CD4-positive, alpha-beta T cell (primary cell): ENCODE measurements at regions of chr14 and their contacts with region 1.

Region 1: GRCh38 chr14:35826218-35826951 is at the start of gene BRMS1L:
- DNase-seq: peak; percentile 90 to 98 (median 95)
- ATAC-seq: peak; percentile 98
- H3K4me3 ChIP-seq: peak within 1 kb of the TSS; percentile 99
- H3K4me3 Mint-ChIP-seq: peak within 1 kb of the TSS; percentile 88
- H3K27ac ChIP-seq: peak within 1 kb of the TSS; percentile 72 to 89
- H3K27ac Mint-ChIP-seq: peak within 1 kb of the TSS; percentile 68
- H3K4me1 ChIP-seq: peaks cover 15% of the 10 kb centered on the region
- H3K4me1 Mint-ChIP-seq: peaks cover 31% of the 10 kb centered on the region
- H3K27me3 ChIP-seq: no peaks in the 10 kb centered on the region
- H3K27me3 Mint-ChIP-seq: no peaks in the 10 kb centered on the region
- CTCF ChIP-seq: no peak
- total RNA-seq, gene BRMS1L: 6.1 to 9.2 TPM

Region 2: GRCh38 chr14:34539407-34540180 is 1286.8 kb before region 1 on chr14 and contains the start of gene EAPP:
- CTCF ChIA-PET with region 1: no interaction called
- POLR2A ChIA-PET with region 1: no interaction called
- intact Hi-C with region 1: loop called in 1 of 2 experiments (anchors 5 kb)
- DNase-seq: peak; percentile 90 to 97 (median 95)
- ATAC-seq: peak; percentile 97
- H3K4me3 ChIP-seq: peak within 1 kb of the TSS; percentile 88
- H3K4me3 Mint-ChIP-seq: peak within 1 kb of the TSS; percentile 99
- H3K27ac ChIP-seq: peak within 1 kb of the TSS; percentile 89 to 93
- H3K27ac Mint-ChIP-seq: peak within 1 kb of the TSS; percentile 98
- H3K4me1 ChIP-seq: peaks cover 31% of the 10 kb centered on the region
- H3K4me1 Mint-ChIP-seq: peaks cover 33% of the 10 kb centered on the region
- H3K27me3 ChIP-seq: no peaks in the 10 kb centered on the region
- H3K27me3 Mint-ChIP-seq: no peaks in the 10 kb centered on the region
- CTCF ChIP-seq: no peak
- total RNA-seq, gene EAPP: 94.5 to 98.3 TPM

Region 3: DNA sequence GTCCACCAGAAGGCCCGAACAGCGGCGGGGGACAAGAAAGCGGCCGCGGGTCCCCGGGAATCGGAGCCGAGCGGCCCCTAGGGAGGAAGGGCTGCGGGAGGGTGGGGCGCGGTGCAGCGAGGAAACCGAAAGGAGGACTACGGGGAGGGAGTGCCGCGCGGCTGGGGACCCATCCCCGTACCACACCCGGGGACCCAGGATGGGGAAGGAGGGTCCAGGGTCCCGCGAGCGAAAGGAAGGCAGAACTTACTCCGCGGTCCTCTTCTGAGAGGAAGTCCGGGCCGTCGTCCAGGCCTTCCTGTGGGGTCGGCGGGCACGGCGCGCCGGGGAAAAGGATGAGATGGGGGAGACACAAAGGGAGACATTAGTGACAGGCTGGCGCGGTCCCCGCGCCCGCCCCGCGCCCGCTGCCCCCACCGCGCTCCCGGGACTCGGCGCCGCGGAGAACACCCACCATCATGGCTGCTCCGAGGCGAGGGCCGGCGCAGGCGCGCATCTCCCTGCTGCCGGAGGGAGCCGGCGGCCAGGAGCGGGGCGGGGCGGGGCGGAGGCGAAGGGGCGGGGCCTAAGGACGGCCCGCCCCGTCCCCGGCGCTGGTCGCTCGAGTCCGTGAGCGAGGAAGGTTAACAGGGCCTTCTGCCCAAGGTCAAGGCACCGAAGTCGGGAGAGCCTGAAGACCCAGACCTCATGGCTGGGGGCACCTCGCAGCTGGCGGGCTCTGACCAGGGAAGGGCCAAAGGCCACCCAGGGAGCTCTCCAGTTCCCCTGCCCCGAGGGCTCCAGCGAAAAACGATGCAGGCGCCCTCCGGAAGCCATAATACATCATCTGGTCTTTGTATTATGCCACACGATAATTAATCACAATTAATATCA is 1196.5 kb before region 1 on chr14 and contains the start of gene SNX6:
- CTCF ChIA-PET with region 1: no interaction called
- POLR2A ChIA-PET with region 1: no interaction called
- intact Hi-C with region 1: loop called in 1 of 2 experiments (anchors 5 kb)
- DNase-seq: peak; percentile 73 to 94 (median 81)
- ATAC-seq: peak; percentile 96
- H3K4me3 ChIP-seq: peak within 1 kb of the TSS; percentile 96
- H3K4me3 Mint-ChIP-seq: peak within 1 kb of the TSS; percentile 95
- H3K27ac ChIP-seq: peak within 1 kb of the TSS; percentile 86 to 89
- H3K27ac Mint-ChIP-seq: peak within 1 kb of the TSS; percentile 88
- H3K4me1 ChIP-seq: peaks cover 39% of the 10 kb centered on the region
- H3K4me1 Mint-ChIP-seq: peaks cover 27% of the 10 kb centered on the region
- H3K27me3 ChIP-seq: no peaks in the 10 kb centered on the region
- H3K27me3 Mint-ChIP-seq: no peaks in the 10 kb centered on the region
- CTCF ChIP-seq: no peak
- total RNA-seq, gene SNX6: 51.5 to 55.8 TPM

Region 4: GRCh38 chr14:35046048-35046741 is 780.2 kb before region 1 on chr14 and contains the start of gene FAM177A1:
- CTCF ChIA-PET with region 1: no interaction called
- POLR2A ChIA-PET with region 1: no interaction called
- intact Hi-C with region 1: loop called in 1 of 2 experiments (anchors 10 kb)
- DNase-seq: peak; percentile 94 to 100 (median 98)
- ATAC-seq: peak; percentile 83
- H3K4me3 ChIP-seq: peak within 1 kb of the TSS; percentile 68
- H3K4me3 Mint-ChIP-seq: peak within 1 kb of the TSS; percentile 91
- H3K27ac ChIP-seq: peak within 1 kb of the TSS; percentile 96 to 97
- H3K27ac Mint-ChIP-seq: peak within 1 kb of the TSS; percentile 94
- H3K4me1 ChIP-seq: peaks cover 11% of the 10 kb centered on the region
- H3K4me1 Mint-ChIP-seq: peaks cover 36% of the 10 kb centered on the region
- H3K27me3 ChIP-seq: no peaks in the 10 kb centered on the region
- H3K27me3 Mint-ChIP-seq: no peaks in the 10 kb centered on the region
- CTCF ChIP-seq: no peak
- total RNA-seq, gene FAM177A1: 172 to 186 TPM

Region 5: GRCh38 chr14:35292051-35292769 is 534.2 kb before region 1 on chr14 and contains the start of gene PSMA6:
- CTCF ChIA-PET with region 1: no interaction called
- POLR2A ChIA-PET with region 1: no interaction called
- intact Hi-C with region 1: loop called (anchors 5 kb)
- DNase-seq: peak; percentile 97 to 100 (median 99)
- ATAC-seq: peak; percentile 96
- H3K4me3 ChIP-seq: peak within 1 kb of the TSS; percentile 78
- H3K4me3 Mint-ChIP-seq: peak within 1 kb of the TSS; percentile 98
- H3K27ac ChIP-seq: peak within 1 kb of the TSS; percentile 80 to 86
- H3K27ac Mint-ChIP-seq: peak within 1 kb of the TSS; percentile 95
- H3K4me1 ChIP-seq: peaks cover 38% of the 10 kb centered on the region
- H3K4me1 Mint-ChIP-seq: peaks cover 50% of the 10 kb centered on the region
- H3K27me3 ChIP-seq: no peaks in the 10 kb centered on the region
- H3K27me3 Mint-ChIP-seq: no peaks in the 10 kb centered on the region
- CTCF ChIP-seq: no peak
- total RNA-seq, gene PSMA6: 80.8 TPM

Region 6: GRCh38 chr14:35808076-35808652 is 18.2 kb before region 1 on chr14:
- CTCF ChIA-PET with region 1: interaction called, 7 read pairs
- POLR2A ChIA-PET with region 1: interaction called, 42 read pairs
- intact Hi-C with region 1: loop called in 1 of 2 experiments (anchors 1 kb)
- DNase-seq: peak in 6 of 14 experiments; percentile 15 to 53 (median 40)
- ATAC-seq: no peak
- H3K4me3 ChIP-seq: peak overlapping the region; percentile 85
- H3K4me3 Mint-ChIP-seq: peak overlapping the region; percentile 99
- H3K27ac ChIP-seq: peak overlapping the region; percentile 75 to 88
- H3K27ac Mint-ChIP-seq: peak overlapping the region; percentile 88
- H3K4me1 ChIP-seq: peaks cover 17% of the 10 kb centered on the region
- H3K4me1 Mint-ChIP-seq: peaks cover 44% of the 10 kb centered on the region
- H3K27me3 ChIP-seq: no peaks in the 10 kb centered on the region
- H3K27me3 Mint-ChIP-seq: no peaks in the 10 kb centered on the region
- CTCF ChIP-seq: no peak

Region 7: GRCh38 chr14:36320200-36320896 is 494.0 kb after region 1 on chr14 and contains the start of gene MBIP:
- CTCF ChIA-PET with region 1: no interaction called
- POLR2A ChIA-PET with region 1: interaction called, 14 read pairs
- intact Hi-C with region 1: loop called in 1 of 2 experiments (anchors 5 kb)
- DNase-seq: peak; percentile 82 to 97 (median 87)
- ATAC-seq: peak; percentile 96
- H3K4me3 ChIP-seq: peak within 1 kb of the TSS; percentile 92
- H3K4me3 Mint-ChIP-seq: peak within 1 kb of the TSS; percentile 96
- H3K27ac ChIP-seq: peak within 1 kb of the TSS; percentile 21 to 55
- H3K27ac Mint-ChIP-seq: peak within 1 kb of the TSS; percentile 85
- H3K4me1 ChIP-seq: peaks cover 6% of the 10 kb centered on the region
- H3K4me1 Mint-ChIP-seq: peaks cover 48% of the 10 kb centered on the region
- H3K27me3 ChIP-seq: peaks cover 0 to 19% of the 10 kb centered on the region in 2 experiments
- H3K27me3 Mint-ChIP-seq: peaks cover 12% of the 10 kb centered on the region
- CTCF ChIP-seq: no peak
- total RNA-seq, gene MBIP: 77.9 to 78.9 TPM